IMR-90 (cell line): ENCODE measurements at regions of chr3 and their contacts with region 1.

Region 1: GRCh38 chr3:172039436-172040077 is at the start of gene FNDC3B:
- DNase-seq: peak; percentile 95
- ATAC-seq: peak; percentile 66
- H3K4me3 ChIP-seq: peak within 1 kb of the TSS; percentile 63
- H3K27ac ChIP-seq: peak within 1 kb of the TSS; percentile 72
- H3K4me1 ChIP-seq: no peaks in the 10 kb centered on the region; the same call in 1 of the 2 replicates
- H3K27me3 ChIP-seq: no peaks in the 10 kb centered on the region
- CTCF ChIP-seq: no peak
- POLR2A ChIP-seq: peak; percentile 93
- RAD21 ChIP-seq: peak; percentile 34
- total RNA-seq, gene FNDC3B: 128 and 150 TPM in 2 replicates

Region 2: DNA sequence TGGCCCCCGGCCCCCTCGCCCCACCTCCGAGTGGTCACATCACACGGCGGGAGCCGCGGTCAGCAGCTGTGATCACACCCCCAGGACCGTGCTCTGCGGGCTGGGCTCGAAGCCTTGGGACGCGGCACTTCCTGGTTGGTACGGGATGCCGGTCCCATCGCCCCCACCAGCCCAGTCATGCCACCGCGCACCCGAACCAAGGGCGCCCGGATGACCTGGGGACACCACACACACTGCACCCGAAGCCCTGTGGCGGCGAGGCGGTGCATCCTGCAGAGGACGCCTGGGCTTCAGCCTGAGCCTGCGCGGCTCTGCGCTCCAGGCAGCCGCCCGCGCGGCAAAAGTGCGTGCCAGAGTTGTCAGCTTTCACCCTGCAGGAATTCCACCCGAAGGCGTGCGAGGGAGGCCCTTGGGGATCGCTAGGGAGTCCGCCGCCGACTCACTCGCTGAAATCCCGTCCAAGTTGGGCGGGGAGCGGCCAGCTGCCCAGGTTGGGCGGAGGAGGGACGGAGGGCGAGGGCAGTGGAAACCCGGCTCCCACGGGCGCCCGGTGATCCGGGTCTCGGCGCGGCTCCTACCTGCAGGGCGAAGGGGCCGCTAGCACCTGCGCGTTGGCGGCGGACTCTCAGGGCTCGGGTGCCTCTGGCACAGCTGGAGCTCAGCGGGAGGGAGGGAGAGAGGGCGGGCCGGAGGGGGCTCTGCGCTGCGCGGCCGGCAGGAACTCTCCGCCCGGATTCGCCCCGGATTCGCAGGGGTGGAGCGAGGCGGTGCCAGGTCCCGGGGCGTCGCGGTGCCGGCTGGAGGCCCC is 229.5 kb before region 1 on chr3 and contains the start of gene PLD1:
- CTCF ChIA-PET with region 1: no interaction called
- POLR2A ChIA-PET with region 1: interaction called, 3 read pairs
- dilution Hi-C with region 1: no loop called
- in situ Hi-C with region 1: no loop called
- intact Hi-C with region 1: loop called (anchors 1 kb)
- DNase-seq: peak; percentile 95
- ATAC-seq: peak; percentile 83
- H3K4me3 ChIP-seq: peak within 1 kb of the TSS; percentile 76
- H3K27ac ChIP-seq: peak within 1 kb of the TSS; percentile 96
- H3K4me1 ChIP-seq: peaks cover 15% of the 10 kb centered on the region
- H3K27me3 ChIP-seq: no peaks in the 10 kb centered on the region
- CTCF ChIP-seq: no peak
- POLR2A ChIP-seq: peak; percentile 71
- RAD21 ChIP-seq: peak; percentile 47
- total RNA-seq, gene PLD1: 9.2 and 9.7 TPM in 2 replicates

Region 3: GRCh38 chr3:171874251-171874679 is 165.3 kb before region 1 on chr3:
- CTCF ChIA-PET with region 1: no interaction called
- POLR2A ChIA-PET with region 1: interaction called, 10 read pairs
- dilution Hi-C with region 1: no loop called
- in situ Hi-C with region 1: no loop called
- intact Hi-C with region 1: loop called (anchors 1 kb)
- DNase-seq: peak; percentile 99
- ATAC-seq: peak; percentile 89
- H3K4me3 ChIP-seq: no peak overlapping the region
- H3K27ac ChIP-seq: peak overlapping the region; percentile 85; the same call in 1 of the 2 replicates
- H3K4me1 ChIP-seq: peaks cover 31% of the 10 kb centered on the region
- H3K27me3 ChIP-seq: no peaks in the 10 kb centered on the region
- CTCF ChIP-seq: no peak
- POLR2A ChIP-seq: peak; percentile 68; the same call in 1 of the 2 replicates
- RAD21 ChIP-seq: 0 out of 2 replicates have a peak, but pooled peaks have one; percentile 3

Region 4: GRCh38 chr3:172002512-172003078 is 37.0 kb before region 1 on chr3:
- CTCF ChIA-PET with region 1: no interaction called
- POLR2A ChIA-PET with region 1: interaction called, 11 read pairs
- dilution Hi-C with region 1: no loop called
- in situ Hi-C with region 1: no loop called
- intact Hi-C with region 1: no loop called
- DNase-seq: peak; percentile 32
- ATAC-seq: peak; percentile 48
- H3K4me3 ChIP-seq: no peak overlapping the region
- H3K27ac ChIP-seq: peak overlapping the region; percentile 37; the same call in 1 of the 2 replicates
- H3K4me1 ChIP-seq: 0 out of 2 replicates have a peak, but pooled peaks cover 2% of the 10 kb centered on the region
- H3K27me3 ChIP-seq: no peaks in the 10 kb centered on the region
- CTCF ChIP-seq: no peak
- POLR2A ChIP-seq: no peak
- RAD21 ChIP-seq: no peak